ENCODE measurements at regions of chr20 and their contacts with region 1.

Region 1: GRCh38 chr20:32484958-32485769 is 100.0 kb downstream of the NOL4L start:
- DNase-seq: peak; percentile 91
- ATAC-seq: peak; percentile 85
- H3K4me3 Mint-ChIP-seq: peak overlapping the region; percentile 78
- H3K27ac Mint-ChIP-seq: peak overlapping the region; percentile 75
- H3K4me1 Mint-ChIP-seq: peaks cover 16% of the 10 kb centered on the region
- H3K27me3 Mint-ChIP-seq: no peaks in the 10 kb centered on the region

Region 2: DNA sequence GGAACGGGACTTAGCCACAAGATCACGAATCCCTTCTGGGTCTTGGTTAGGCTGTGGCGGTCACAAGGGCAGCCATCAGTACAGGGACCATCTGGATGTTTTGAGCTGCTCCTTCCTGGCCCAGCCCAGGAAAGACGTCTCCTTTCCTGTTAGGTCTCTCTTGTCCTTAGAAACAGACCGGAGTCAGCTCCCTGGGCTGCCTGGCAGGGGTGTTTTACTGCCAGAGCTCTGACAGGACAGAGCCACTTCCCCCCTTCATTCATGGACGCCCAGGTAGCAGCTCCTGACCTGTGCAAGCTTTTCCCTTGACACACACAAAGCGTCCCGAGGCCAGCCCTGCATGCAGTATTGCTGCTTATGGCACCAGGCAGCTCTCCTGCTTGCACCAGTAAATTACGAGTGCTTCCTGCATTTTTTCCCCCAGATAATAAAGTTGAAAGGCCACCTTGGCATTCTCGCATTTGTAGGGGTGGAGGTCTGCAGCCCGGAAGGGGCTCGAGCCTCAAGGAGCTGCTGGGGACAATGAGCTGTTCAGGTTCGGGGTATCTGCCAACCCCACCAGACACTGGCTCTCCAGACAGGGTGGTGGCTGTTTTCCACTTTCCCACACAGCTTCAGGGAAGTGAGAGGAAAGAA is 12.5 kb after region 1 on chr20:
- CTCF ChIA-PET with region 1: interaction called, 14 read pairs
- DNase-seq: no peak
- ATAC-seq: no peak
- H3K4me3 Mint-ChIP-seq: no peak overlapping the region
- H3K27ac Mint-ChIP-seq: no peak overlapping the region
- H3K4me1 Mint-ChIP-seq: peaks cover 2% of the 10 kb centered on the region
- H3K27me3 Mint-ChIP-seq: no peaks in the 10 kb centered on the region

Region 3: DNA sequence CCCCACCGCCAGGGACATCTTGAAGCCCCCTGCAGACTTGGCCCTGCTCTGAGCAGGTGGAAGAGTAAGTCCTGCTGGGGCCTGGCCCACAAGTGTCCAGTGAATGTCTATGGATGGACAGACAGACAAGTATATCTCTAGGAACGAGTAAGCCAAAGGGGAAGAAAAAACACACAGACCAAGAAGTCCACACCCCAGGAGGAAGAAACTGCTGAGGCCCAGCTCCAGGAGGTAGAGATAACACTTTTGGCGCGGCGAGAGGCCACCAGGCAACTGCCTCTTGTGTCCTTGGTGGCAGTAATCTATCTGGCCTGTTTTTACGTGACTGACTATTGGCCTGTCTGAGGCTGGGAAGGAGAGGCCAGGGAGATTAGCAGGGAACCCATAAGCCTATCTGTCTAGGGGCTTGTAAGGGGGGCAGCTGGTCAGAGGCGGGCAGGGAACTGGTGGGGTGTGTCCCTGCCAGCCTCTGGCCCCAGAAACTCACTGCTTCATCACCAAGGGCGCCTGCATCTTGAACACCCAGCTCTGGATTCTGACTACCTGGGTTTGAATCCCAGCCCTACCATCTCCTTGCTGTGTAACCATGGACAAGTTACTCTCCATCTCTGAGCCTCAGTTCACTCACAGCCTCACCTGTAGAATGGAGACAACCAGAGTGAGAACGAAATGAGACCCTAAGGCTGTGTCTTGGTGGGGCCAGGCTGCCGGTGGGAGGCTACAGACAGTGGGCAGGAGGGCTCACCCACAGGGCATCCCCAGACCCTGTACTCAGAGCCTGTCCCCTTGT is 157.3 kb after region 1 on chr20:
- CTCF ChIA-PET with region 1: no interaction called
- DNase-seq: no peak
- ATAC-seq: no peak
- H3K4me3 Mint-ChIP-seq: no peak overlapping the region
- H3K27ac Mint-ChIP-seq: no peak overlapping the region
- H3K4me1 Mint-ChIP-seq: no peaks in the 10 kb centered on the region
- H3K27me3 Mint-ChIP-seq: no peaks in the 10 kb centered on the region

Measured in activated CD8-positive, alpha-beta memory T cell treated with anti-CD3 and anti-CD28 coated beads, Interleukin-2, amount 10 ng/mL, durations not matched to agents 7 days and 5 days (primary cell).